Gastrocnemius medialis (tissue), 4 donors: ENCODE measurements at regions of chr19 and their contacts with region 1.

Region 1: GRCh38 chr19:15449620-15450527 is at the start of gene WIZ:
- DNase-seq: peak; percentile 59 to 84
- ATAC-seq: peak; percentile 32 to 34
- H3K4me3 ChIP-seq: peak within 1 kb of the TSS; percentile 69 to 84 (median 79)
- H3K27ac ChIP-seq: peak within 1 kb of the TSS; percentile 87 to 99 (median 98)
- H3K4me1 ChIP-seq: peaks cover 30% of the 10 kb centered on the region in 2 donors
- H3K27me3 ChIP-seq: peaks cover 0 to under 1% (median 0%) of the 10 kb centered on the region in 3 donors
- CTCF ChIP-seq: no peak
- POLR2A ChIP-seq: peak; percentile 64 to 67
- total RNA-seq, gene WIZ: 28.0 to 40.6 (median 32.5) TPM

Region 2: DNA sequence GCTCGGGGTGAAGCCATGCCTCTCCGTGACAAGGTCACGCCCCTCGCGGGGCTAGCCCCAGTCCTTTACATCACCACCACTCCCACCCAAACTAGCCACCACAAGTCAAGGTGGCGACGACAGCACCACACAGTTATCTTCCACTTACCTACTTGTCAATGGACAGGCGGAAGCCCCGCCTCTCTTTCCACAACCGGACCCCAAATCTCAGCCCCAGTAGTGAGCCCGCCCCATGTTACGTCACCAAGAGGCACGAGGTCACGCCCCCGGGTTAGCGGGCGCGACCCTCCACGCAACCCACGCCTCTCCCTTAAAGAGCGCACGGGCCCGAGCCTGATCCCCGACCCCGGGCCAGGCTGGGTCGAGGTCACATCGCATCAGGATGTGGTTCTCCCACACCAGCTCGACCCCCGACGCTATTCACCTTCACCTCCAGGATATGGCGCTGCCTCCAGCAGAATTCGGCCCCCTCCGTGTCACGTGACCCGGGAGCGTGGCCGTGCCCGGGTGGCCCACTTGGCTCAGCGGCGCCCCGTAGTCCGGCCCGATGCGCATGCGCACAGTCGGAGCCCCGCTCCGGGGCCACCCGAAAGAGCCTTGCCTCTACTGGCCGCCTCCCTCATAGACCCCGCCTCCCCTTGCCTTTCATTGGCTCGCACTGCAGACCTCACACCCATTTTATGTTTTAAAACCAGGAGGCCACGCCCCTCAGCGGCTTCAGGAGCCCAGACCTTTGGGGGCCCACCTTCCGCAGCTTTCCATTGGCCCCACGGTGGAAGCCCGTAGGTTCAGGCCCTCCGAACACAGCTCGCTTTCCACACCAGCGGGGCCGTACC is 324.4 kb before region 1 on chr19:
- in situ Hi-C with region 1: no loop called
- intact Hi-C with region 1: loop called (anchors 2 kb)
- DNase-seq: peak; percentile 95 to 98
- ATAC-seq: peak; percentile 94 to 95
- H3K4me3 ChIP-seq: peak overlapping the region; percentile 78 to 85 (median 84)
- H3K27ac ChIP-seq: peak overlapping the region; percentile 89 to 95 (median 93)
- H3K4me1 ChIP-seq: peaks cover 13 to 15% of the 10 kb centered on the region in 2 donors
- H3K27me3 ChIP-seq: no peaks in the 10 kb centered on the region
- CTCF ChIP-seq: peak in 2 of 5 experiments; percentile 35 to 48
- POLR2A ChIP-seq: peak; percentile 40 to 42

Region 3: DNA sequence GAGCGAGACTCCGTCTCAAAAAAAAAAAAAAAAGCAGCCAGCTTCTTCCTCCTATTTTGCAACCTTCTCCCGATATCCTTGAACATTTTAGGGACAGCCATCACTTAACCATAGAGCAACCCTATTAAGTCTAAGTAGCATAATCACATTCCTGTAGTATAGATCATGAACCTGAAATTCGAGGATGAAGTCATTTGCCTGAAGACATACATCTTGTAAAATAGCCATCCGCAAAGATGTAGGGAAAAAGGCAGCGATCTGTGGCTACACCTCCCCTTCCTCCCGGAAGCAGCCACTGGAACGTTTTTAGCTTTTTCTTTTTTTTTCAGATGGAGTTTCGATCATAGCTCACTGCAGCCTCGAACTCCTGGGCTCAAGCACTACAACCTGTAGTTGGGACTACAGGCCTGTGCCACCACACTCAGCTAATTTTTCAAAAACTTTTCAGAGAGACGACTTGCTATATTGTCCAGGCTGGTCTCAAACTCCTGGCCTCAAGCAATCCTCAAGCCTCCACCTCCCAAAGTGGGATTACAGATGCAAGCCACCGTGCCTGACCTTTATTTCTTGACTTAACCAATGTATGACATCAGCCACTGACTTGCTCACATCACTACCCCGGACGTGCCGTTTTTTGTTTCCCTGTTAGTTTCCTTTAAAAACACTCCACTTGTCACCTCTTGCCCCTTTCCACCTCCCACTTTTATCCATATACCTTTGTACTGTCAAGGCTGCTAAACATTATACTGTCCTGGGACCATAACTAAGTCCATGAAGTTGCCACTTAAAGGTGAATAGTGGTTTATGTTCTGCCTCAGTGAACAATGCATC is 215.6 kb before region 1 on chr19:
- in situ Hi-C with region 1: no loop called
- intact Hi-C with region 1: no loop called
- DNase-seq: no peak
- ATAC-seq: no peak
- H3K4me3 ChIP-seq: no peak overlapping the region
- H3K27ac ChIP-seq: no peak overlapping the region
- H3K4me1 ChIP-seq: no peaks in the 10 kb centered on the region
- H3K27me3 ChIP-seq: peaks cover 13 to 16% (median 15%) of the 10 kb centered on the region in 3 donors
- CTCF ChIP-seq: no peak
- POLR2A ChIP-seq: no peak

Region 4: GRCh38 chr19:15251749-15252397 is 198.0 kb before region 1 on chr19:
- in situ Hi-C with region 1: loop called in 2 of 4 experiments (anchors 25 kb)
- intact Hi-C with region 1: loop called (anchors 5 kb)
- DNase-seq: peak; percentile 79 to 95
- ATAC-seq: peak; percentile 73 to 77
- H3K4me3 ChIP-seq: peak overlapping the region in 3 of 4 donors; percentile 24 to 45 (median 34)
- H3K27ac ChIP-seq: peak overlapping the region; percentile 84 to 96 (median 90)
- H3K4me1 ChIP-seq: peaks cover 70 to 71% of the 10 kb centered on the region in 2 donors
- H3K27me3 ChIP-seq: no peaks in the 10 kb centered on the region
- CTCF ChIP-seq: peak; percentile 41 to 67 (median 54)
- POLR2A ChIP-seq: peak in 1 of 2 donors; percentile 25

Region 5: GRCh38 chr19:15318241-15318691 is 131.6 kb before region 1 on chr19:
- in situ Hi-C with region 1: no loop called
- intact Hi-C with region 1: loop called (anchors 1 kb)
- DNase-seq: no peak
- ATAC-seq: peak; percentile 45 to 53
- H3K4me3 ChIP-seq: peak overlapping the region in 1 of 4 donors; percentile 7
- H3K27ac ChIP-seq: peak overlapping the region; percentile 77 to 98 (median 90)
- H3K4me1 ChIP-seq: peaks cover 96 to 98% of the 10 kb centered on the region in 2 donors
- H3K27me3 ChIP-seq: no peaks in the 10 kb centered on the region
- CTCF ChIP-seq: no peak
- POLR2A ChIP-seq: no peak

Region 6: GRCh38 chr19:15332311-15332996 is 117.4 kb before region 1 on chr19 and contains the start of gene BRD4:
- in situ Hi-C with region 1: no loop called
- intact Hi-C with region 1: loop called (anchors 5 kb)
- DNase-seq: peak; percentile 38 to 62
- ATAC-seq: peak; percentile 63 to 72
- H3K4me3 ChIP-seq: peak within 1 kb of the TSS; percentile 82 to 97 (median 96)
- H3K27ac ChIP-seq: peak within 1 kb of the TSS; percentile 91 to 98 (median 96)
- H3K4me1 ChIP-seq: peaks cover 66 to 70% of the 10 kb centered on the region in 2 donors
- H3K27me3 ChIP-seq: no peaks in the 10 kb centered on the region
- CTCF ChIP-seq: no peak
- POLR2A ChIP-seq: peak; percentile 72 to 78
- total RNA-seq, gene BRD4: 64.8 to 83.2 (median 73.9) TPM

Region 7: GRCh38 chr19:15365264-15365663 is 84.6 kb before region 1 on chr19:
- in situ Hi-C with region 1: no loop called
- intact Hi-C with region 1: no loop called
- DNase-seq: no peak
- ATAC-seq: no peak
- H3K4me3 ChIP-seq: no peak overlapping the region
- H3K27ac ChIP-seq: no peak overlapping the region
- H3K4me1 ChIP-seq: no peaks in the 10 kb centered on the region
- H3K27me3 ChIP-seq: no peaks in the 10 kb centered on the region
- CTCF ChIP-seq: no peak
- POLR2A ChIP-seq: no peak

Region 8: GRCh38 chr19:15404097-15404779 is 45.6 kb before region 1 on chr19:
- in situ Hi-C with region 1: no loop called
- intact Hi-C with region 1: no loop called
- DNase-seq: no peak
- ATAC-seq: peak; percentile 37 to 60
- H3K4me3 ChIP-seq: peak overlapping the region in 1 of 4 donors; percentile 3
- H3K27ac ChIP-seq: peak overlapping the region; percentile 73 to 96 (median 88)
- H3K4me1 ChIP-seq: peaks cover 79 to 89% of the 10 kb centered on the region in 2 donors
- H3K27me3 ChIP-seq: no peaks in the 10 kb centered on the region
- CTCF ChIP-seq: no peak
- POLR2A ChIP-seq: no peak